Left colon (tissue), 2 donors: ENCODE measurements at regions of chr16 and their contacts with region 1.

Region 1: DNA sequence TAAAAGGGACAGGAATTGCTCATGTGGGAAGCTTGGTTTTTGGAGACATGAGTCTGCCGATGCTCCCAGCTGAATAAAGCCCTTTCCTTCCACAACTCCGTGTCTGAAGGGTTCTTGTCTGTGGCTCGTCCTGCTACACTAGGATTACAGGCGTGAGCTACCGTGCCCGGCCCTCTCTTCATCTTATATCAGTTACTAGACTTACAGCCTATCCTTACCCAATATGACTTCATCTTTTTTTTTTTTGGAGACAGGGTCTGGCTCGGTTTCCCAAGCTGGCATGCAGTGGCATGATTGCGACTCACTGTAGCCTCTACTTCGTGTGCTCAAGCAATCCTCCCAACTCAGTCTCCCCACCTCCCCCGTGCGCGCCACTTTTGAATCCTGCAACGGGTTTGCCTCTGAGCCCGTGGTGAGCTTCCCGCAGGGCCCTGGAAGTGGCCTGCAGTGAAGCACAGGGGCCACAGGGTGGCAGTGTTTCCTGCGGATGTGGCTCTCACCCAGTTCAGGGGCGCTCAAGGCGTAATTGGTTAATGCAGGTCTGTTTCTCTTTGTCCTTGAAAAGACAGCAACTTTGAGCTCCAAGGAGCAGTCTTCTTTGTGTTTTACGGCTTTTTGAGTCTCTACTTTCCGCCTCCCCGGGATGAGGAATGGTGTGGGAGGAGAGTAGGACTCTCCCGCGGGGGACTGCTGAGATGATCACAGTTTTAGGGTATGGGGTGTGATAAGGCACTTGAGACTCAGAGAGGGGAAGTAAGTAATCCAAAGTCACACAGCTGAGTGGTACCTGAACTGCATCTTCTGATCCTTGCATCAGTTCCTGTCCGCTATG is 22.7 kb upstream of the GPRC5B start:
- DNase-seq: peak in 1 of 2 donors; percentile 49
- ATAC-seq: peak; percentile 88

Region 2: GRCh38 chr16:19991614-19992013 is 84.2 kb after region 1 on chr16:
- intact Hi-C with region 1: no loop called
- DNase-seq: no peak
- ATAC-seq: no peak

Region 3: GRCh38 chr16:20300312-20301097 is 393.1 kb after region 1 on chr16:
- intact Hi-C with region 1: loop called in 1 of 2 experiments (anchors 5 kb)
- DNase-seq: peak; percentile 27 to 39
- ATAC-seq: peak; percentile 89

Region 4: DNA sequence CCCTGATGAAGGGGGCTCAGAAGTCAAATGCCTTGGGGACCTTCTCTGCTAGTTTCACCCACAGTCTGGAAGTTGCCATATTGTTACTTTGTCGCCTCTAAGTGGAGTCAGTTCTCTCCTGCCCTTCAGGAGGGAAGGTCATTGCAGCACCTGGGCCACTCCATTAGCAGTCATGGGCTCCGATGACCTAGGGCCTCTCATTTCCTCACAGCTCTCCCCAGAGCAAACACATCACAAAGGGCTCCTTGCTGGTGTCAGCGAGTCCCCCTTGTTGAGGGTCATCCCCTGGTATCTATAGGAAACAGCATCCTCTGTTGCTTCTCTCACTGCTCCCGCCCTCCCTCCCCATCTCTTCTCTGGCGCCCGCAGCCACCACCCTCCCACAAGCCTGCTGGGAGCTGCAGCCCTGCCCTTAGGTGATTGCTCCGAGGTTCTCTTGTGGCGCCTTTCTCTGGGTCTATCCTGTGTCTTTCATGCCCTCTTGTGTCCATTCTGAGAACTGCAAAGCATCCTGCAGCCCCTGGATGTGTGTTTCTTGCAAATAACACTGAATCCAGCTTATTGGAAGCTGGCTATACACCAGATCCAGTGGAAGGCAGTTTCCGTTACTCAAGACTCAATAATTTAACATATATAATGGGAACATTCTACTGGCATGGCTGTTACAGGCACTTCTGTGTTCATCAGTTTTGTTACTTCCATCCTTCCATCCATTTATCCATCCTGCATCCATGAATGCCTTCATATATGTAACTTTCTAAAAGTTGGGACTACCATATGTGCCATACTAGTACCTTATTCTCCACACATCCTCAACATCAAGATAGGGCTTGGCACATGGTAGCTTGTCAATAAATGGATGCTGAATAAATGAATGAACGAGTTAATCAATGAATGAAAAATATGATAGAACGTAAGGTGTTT is 476.0 kb after region 1 on chr16:
- intact Hi-C with region 1: loop called (anchors 5 to 10 kb)
- DNase-seq: peak; percentile 28 to 50
- ATAC-seq: peak; percentile 97